Activated CD4-positive, alpha-beta memory T cell treated with anti-CD3 and anti-CD28 coated beads for 36 hours (primary cell): ENCODE measurements at regions of chr6 and their contacts with region 1.

Region 1: DNA sequence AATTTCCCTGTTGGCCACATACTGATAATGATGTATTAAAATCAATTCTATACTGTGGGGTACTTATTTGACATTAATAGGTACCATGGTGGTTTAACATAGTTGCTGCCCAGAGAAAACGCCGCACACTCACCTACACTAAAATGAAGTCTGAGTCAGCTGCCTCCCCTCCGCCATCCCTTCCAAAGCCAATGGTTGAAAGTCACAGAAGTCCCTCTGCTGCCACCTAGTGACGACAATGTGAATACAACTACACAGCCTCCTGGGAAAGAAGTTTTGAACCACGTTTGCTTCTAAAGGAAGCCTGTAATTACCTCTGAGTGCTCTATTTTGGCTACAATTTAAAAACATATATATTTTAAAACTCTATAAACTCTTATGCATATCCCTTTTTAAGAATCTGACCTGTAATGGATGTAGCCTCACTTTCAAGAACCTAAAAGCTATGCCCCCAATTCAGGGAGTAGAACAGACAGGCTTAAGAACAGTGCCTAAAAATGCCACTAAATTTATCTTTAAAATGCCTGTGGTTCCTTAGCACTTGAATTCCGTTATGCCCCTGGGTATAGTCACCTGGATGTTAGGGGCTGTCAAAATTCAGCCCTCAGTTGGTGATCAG is 20.6 kb upstream of the ECI2 start:
- DNase-seq: peak; percentile 86
- H3K4me3 Mint-ChIP-seq: no peak overlapping the region
- H3K27ac Mint-ChIP-seq: no peak overlapping the region
- H3K4me1 Mint-ChIP-seq: peaks cover 4% of the 10 kb centered on the region
- H3K27me3 Mint-ChIP-seq: peaks cover 9% of the 10 kb centered on the region

Region 2: GRCh38 chr6:4055420-4056041 is 100.4 kb before region 1 on chr6:
- CTCF ChIA-PET with region 1: interaction called, 25 read pairs
- POLR2A ChIA-PET with region 1: no interaction called
- intact Hi-C with region 1: loop called (anchors 1 kb)
- DNase-seq: no peak
- H3K4me3 Mint-ChIP-seq: no peak overlapping the region
- H3K27ac Mint-ChIP-seq: no peak overlapping the region
- H3K4me1 Mint-ChIP-seq: peaks cover 30% of the 10 kb centered on the region
- H3K27me3 Mint-ChIP-seq: no peaks in the 10 kb centered on the region

Region 3: GRCh38 chr6:4145083-4145482 is 10.9 kb before region 1 on chr6:
- CTCF ChIA-PET with region 1: interaction called, 15 read pairs
- POLR2A ChIA-PET with region 1: no interaction called
- intact Hi-C with region 1: no loop called
- DNase-seq: no peak
- H3K4me3 Mint-ChIP-seq: no peak overlapping the region
- H3K27ac Mint-ChIP-seq: no peak overlapping the region
- H3K4me1 Mint-ChIP-seq: no peaks in the 10 kb centered on the region
- H3K27me3 Mint-ChIP-seq: no peaks in the 10 kb centered on the region

Region 4: GRCh38 chr6:4210629-4211423 is 54.9 kb after region 1 on chr6:
- CTCF ChIA-PET with region 1: interaction called, 12 read pairs
- POLR2A ChIA-PET with region 1: no interaction called
- intact Hi-C with region 1: loop called (anchors 5 kb)
- DNase-seq: peak; percentile 77
- H3K4me3 Mint-ChIP-seq: no peak overlapping the region
- H3K27ac Mint-ChIP-seq: no peak overlapping the region
- H3K4me1 Mint-ChIP-seq: peaks cover 13% of the 10 kb centered on the region
- H3K27me3 Mint-ChIP-seq: peaks cover 2% of the 10 kb centered on the region

Region 5: GRCh38 chr6:4270776-4271175 is 114.8 kb after region 1 on chr6:
- CTCF ChIA-PET with region 1: no interaction called
- POLR2A ChIA-PET with region 1: no interaction called
- intact Hi-C with region 1: no loop called
- DNase-seq: no peak
- H3K4me3 Mint-ChIP-seq: no peak overlapping the region
- H3K27ac Mint-ChIP-seq: no peak overlapping the region
- H3K4me1 Mint-ChIP-seq: no peaks in the 10 kb centered on the region
- H3K27me3 Mint-ChIP-seq: no peaks in the 10 kb centered on the region